Mammary epithelial cell (primary cell): ENCODE measurements at regions of chr6 and their contacts with region 1.

Region 1: DNA sequence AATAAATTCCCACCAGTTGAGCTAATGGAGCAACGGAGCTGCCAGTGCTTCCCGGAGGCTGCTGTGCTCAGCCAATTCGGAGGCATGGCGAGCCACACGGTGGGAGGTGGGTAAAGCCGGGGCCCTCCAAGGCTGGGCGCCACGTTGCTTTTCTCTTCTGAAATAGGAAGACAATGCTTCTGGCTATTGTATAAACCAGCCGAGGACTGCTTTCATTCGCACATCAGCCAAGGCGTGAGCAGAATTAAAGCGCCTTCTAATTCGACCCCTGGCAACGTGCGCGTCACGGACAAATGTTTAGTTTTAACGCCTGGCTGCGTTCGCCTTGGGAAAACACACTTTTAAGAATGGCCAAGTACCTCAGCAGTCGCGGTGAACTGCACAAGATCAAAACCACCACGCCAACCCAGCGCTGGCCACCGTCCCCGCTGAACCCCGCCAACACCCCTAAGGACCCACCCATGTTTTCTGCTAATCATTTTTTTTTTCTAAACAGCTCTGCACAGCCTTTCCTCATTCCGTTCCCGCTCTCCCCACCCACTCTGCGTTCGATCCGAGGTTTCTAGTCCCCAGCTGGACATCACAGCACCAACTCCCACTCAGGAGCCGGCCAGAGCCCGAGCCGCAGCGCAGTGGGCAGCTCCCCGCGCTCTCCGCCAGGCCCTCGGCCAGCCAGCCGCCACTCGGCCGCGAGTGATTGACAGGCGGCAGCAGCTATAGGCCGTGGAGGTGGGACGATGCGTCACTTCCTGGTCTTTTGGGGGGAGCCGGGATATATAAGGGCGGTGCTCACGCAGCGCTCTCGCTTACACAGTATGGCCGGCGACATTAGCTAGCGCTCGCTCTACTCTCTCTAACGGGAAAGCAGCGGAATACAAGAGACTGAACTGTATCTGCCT is at the start of gene AMD1:
- DNase-seq: peak; percentile 94
- H3K4me3 ChIP-seq: peak within 1 kb of the TSS; percentile 73 to 99 (median 85)
- H3K27ac ChIP-seq: peak within 1 kb of the TSS; percentile 91
- H3K4me1 ChIP-seq: peaks cover 18% of the 10 kb centered on the region
- H3K27me3 ChIP-seq: no peaks in the 10 kb centered on the region
- CTCF ChIP-seq: peak in 1 of 2 donors; percentile 1
- total RNA-seq, gene AMD1: 69.7 to 97.5 TPM

Region 2: GRCh38 chr6:110618591-110619267 is 255.5 kb before region 1 on chr6:
- CTCF ChIA-PET with region 1: no interaction called
- dilution Hi-C with region 1: no loop called
- in situ Hi-C with region 1: no loop called
- intact Hi-C with region 1: loop called (anchors 5 kb)
- DNase-seq: no peak
- H3K4me3 ChIP-seq: no peak overlapping the region
- H3K27ac ChIP-seq: no peak overlapping the region
- H3K4me1 ChIP-seq: peaks cover 11% of the 10 kb centered on the region
- H3K27me3 ChIP-seq: no peaks in the 10 kb centered on the region
- CTCF ChIP-seq: no peak

Region 3: DNA sequence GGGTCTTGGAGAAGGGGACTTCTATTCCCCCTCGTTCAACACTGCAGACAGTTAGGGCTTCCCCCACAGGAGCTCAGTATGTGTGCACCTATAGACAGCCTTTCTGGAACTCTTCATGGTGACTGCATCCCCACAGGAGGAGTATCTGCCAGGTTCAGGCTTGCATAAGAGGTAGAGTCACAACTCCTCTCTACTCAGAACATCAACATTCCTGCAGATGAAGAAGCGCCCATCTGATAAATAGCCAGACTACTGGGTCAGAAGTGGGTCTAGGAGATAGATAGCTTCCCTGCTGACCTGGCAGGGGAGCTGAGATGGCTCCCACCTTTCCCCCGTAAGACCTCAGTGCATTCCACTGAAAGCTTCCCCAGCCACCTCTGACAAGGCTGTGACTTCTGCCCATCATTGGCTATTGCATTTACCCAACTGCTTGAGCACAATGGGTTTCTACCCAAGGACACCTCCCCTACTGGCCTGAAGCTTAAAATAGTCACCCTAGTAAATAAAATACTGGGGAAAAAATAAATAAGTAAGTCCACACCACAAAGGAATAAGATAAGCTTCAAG is 184.1 kb before region 1 on chr6:
- CTCF ChIA-PET with region 1: no interaction called
- dilution Hi-C with region 1: loop called (anchors 5 kb)
- in situ Hi-C with region 1: loop called in 1 of 2 experiments (anchors 25 kb)
- intact Hi-C with region 1: no loop called
- DNase-seq: no peak
- H3K4me3 ChIP-seq: no peak overlapping the region
- H3K27ac ChIP-seq: no peak overlapping the region
- H3K4me1 ChIP-seq: peaks cover 13% of the 10 kb centered on the region
- H3K27me3 ChIP-seq: no peaks in the 10 kb centered on the region
- CTCF ChIP-seq: no peak

Region 4: GRCh38 chr6:110815217-110816109 is 58.8 kb before region 1 on chr6 and contains the start of gene CDK19:
- CTCF ChIA-PET with region 1: no interaction called
- dilution Hi-C with region 1: loop called (anchors 5 kb)
- in situ Hi-C with region 1: no loop called
- intact Hi-C with region 1: loop called (anchors 1 kb)
- DNase-seq: peak; percentile 99
- H3K4me3 ChIP-seq: peak within 1 kb of the TSS; percentile 66 to 97 (median 93)
- H3K27ac ChIP-seq: peak within 1 kb of the TSS; percentile 95
- H3K4me1 ChIP-seq: peaks cover 22% of the 10 kb centered on the region
- H3K27me3 ChIP-seq: no peaks in the 10 kb centered on the region
- CTCF ChIP-seq: no peak
- total RNA-seq, gene CDK19: 8.7 to 8.8 TPM

Region 5: DNA sequence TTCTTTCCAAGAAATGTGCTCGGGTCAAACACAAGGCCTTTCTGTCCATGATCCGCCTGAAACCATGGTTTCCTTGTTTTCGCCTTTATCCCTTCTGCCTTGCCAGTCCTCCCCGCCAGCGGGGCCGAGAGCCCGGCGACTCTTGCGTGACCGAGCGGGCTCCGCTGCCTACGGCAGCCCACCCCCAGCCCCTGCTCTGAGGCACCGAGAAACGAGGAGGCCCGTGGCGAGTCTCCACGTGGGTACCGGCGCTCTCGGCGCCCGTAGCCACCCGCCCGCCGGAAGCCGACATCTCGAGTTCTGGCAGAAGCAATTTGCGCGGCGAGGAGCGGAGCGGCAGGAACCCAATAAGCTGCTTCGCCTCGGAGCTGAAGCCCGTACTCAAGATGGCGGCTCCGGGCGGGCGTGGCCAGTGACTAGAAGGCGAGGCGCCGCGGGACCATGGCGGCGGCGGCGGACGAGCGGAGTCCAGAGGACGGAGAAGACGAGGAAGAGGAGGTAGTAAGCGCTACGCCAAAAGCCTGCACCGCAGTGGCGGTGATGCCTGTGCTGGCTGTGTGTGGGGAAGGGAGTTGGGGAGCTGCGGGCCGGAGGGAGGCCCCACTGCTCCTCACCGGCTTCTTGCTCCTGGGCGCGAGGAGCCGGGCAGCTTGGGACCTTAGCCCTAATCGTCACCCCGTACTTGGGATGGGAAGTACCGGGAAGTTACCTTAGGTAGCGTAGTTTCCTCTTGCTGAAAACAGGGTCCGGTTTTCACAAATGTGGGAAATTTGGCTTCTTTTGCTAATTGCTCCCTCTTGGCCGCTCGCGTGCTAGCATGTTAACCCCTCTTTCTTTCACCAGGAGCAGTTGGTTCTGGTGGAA is 84.3 kb after region 1 on chr6 and contains the start of gene GTF3C6:
- CTCF ChIA-PET with region 1: interaction called, 5 read pairs
- dilution Hi-C with region 1: loop called (anchors 5 kb)
- in situ Hi-C with region 1: no loop called
- intact Hi-C with region 1: no loop called
- DNase-seq: peak; percentile 88
- H3K4me3 ChIP-seq: peak within 1 kb of the TSS; percentile 56 to 94 (median 78)
- H3K27ac ChIP-seq: peak within 1 kb of the TSS; percentile 80
- H3K4me1 ChIP-seq: peaks cover 5% of the 10 kb centered on the region
- H3K27me3 ChIP-seq: no peaks in the 10 kb centered on the region
- CTCF ChIP-seq: no peak
- total RNA-seq, gene GTF3C6: 17.5 to 74.7 TPM